CD8-positive, alpha-beta memory T cell (primary cell): ENCODE measurements at regions of chr1 and their contacts with region 1.

Region 1: DNA sequence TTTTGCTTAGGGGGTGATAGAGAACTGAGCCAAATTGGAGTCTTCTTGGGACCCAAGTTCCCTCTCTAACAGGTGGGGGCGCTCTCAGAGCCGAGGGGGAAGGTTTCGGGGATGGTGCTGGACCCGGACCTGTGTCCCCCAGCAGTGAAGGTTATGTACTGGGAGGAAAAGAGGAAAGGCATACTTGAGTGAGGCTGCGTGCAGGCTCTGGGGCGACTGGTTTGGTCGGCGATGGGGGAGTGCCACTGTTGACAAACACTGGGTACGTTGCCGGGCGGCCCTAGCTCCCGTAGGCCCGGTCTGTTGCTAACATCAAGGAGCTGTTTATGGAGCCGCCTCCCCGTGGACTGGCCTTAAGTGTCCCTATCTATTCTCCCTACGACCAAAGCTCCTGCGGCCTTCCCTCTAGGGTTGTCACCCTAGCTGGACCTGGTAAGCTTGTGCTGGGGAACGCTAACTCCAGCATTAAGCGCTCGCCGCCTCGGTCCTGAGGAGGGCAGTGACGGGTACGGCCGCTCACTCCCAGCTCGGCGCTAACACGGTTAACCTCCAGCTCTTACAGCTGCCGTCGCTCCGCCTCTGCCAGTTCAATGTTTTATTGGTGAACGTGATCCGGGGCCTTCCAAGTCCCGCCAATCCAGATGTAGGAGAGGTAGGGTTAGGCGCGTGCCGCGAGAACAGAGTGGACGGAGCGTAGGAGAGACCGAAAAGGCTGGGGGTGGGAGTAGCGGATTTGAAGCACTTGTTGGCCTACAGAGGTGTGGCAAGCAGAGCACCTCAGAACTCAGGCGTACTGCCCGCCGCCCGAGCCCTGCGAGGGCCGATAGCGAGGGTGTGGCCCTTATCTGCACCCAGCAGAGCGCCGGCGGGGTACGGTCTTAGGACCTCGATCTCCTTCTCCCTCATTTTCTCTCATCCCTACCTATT is at the start of gene PPOX:
- DNase-seq: peak; percentile 88 to 97 (median 93)
- H3K4me3 ChIP-seq: peak within 1 kb of the TSS; percentile 81
- H3K4me3 Mint-ChIP-seq: peak within 1 kb of the TSS; percentile 87 to 96 (median 93)
- H3K27ac ChIP-seq: peak within 1 kb of the TSS; percentile 95
- H3K27ac Mint-ChIP-seq: peak within 1 kb of the TSS; percentile 96 to 100 (median 99)
- H3K4me1 ChIP-seq: peaks cover 27% of the 10 kb centered on the region
- H3K4me1 Mint-ChIP-seq: peaks cover 43 to 76% (median 66%) of the 10 kb centered on the region in 3 donors
- H3K27me3 ChIP-seq: no peaks in the 10 kb centered on the region
- H3K27me3 Mint-ChIP-seq: no peaks in the 10 kb centered on the region
- total RNA-seq, gene PPOX: 24.4 to 31.3 TPM

Region 2: GRCh38 chr1:161059293-161059692 is 106.7 kb before region 1 on chr1:
- CTCF ChIA-PET with region 1: no interaction called
- POLR2A ChIA-PET with region 1: no interaction called
- DNase-seq: no peak
- H3K4me3 ChIP-seq: no peak overlapping the region
- H3K4me3 Mint-ChIP-seq: peak overlapping the region in 3 of 7 donors; percentile 25 to 69 (median 29)
- H3K27ac ChIP-seq: no peak overlapping the region
- H3K27ac Mint-ChIP-seq: peak overlapping the region; percentile 43 to 89 (median 74)
- H3K4me1 ChIP-seq: peaks cover 55% of the 10 kb centered on the region
- H3K4me1 Mint-ChIP-seq: peaks cover 51 to 69% (median 67%) of the 10 kb centered on the region in 3 donors
- H3K27me3 ChIP-seq: no peaks in the 10 kb centered on the region
- H3K27me3 Mint-ChIP-seq: peaks cover 0 to 1% of the 10 kb centered on the region in 2 donors

Region 3: DNA sequence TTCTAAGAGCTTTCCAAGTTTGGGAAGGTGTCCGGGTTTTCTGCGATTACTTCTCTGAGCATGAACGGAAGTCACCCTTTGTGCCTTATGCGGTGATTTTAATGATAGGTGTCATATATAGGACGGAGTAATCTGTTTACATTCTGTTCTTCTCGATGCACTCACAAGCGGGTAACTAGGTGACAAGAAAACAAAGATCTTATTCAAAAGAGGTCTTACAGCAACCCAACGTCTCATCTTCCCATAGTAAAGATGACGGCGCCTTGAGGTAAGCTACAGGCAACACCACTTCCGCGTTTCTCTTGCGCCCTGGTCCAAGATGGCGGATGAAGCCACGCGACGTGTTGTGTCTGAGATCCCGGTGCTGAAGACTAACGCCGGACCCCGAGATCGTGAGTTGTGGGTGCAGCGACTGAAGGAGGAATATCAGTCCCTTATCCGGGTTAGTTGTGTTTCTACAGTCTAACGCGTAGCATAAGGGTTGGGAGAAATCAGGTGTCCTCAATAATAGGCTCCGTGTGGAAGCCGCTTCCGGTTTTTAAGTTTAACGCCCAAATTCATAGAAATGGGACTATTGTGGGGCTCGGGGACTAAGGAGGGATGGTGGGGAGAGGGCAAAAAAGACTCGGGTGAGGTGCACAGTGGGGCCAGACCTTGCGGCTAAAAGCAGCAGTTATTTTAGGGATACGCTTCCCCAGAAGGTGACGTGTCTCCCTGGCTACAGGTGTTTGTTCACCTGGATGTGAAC is 12.2 kb before region 1 on chr1 and contains the start of gene UFC1:
- CTCF ChIA-PET with region 1: interaction called, 44 read pairs
- POLR2A ChIA-PET with region 1: interaction called, 9 read pairs
- DNase-seq: peak; percentile 68 to 90 (median 88)
- H3K4me3 ChIP-seq: peak within 1 kb of the TSS; percentile 87
- H3K4me3 Mint-ChIP-seq: peak within 1 kb of the TSS; percentile 98 to 100 (median 98)
- H3K27ac ChIP-seq: peak within 1 kb of the TSS; percentile 98
- H3K27ac Mint-ChIP-seq: peak within 1 kb of the TSS; percentile 98 to 100 (median 100)
- H3K4me1 ChIP-seq: peaks cover 14% of the 10 kb centered on the region
- H3K4me1 Mint-ChIP-seq: peaks cover 25 to 45% (median 34%) of the 10 kb centered on the region in 3 donors
- H3K27me3 ChIP-seq: no peaks in the 10 kb centered on the region
- H3K27me3 Mint-ChIP-seq: no peaks in the 10 kb centered on the region
- total RNA-seq, gene UFC1: 109 to 118 TPM

Region 4: DNA sequence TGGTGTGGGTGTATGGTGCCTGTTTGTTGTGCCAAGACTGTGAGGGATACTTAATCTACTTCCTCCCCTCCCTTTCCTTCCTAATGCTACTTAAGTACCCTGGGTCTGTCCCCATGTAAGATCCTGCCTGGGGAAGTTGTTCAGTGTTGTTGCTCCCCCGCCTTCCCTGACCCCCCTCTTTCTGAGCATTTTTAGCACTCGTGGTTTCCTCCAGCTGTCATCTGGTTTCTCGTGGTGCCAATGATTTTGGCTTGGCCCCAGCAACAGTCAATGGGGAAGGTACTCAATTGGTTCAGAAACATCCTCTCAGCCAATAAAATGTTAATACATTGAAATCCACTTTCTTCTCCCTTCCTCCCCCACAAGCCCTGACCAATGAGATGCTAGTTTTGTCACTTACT is 19.3 kb after region 1 on chr1:
- CTCF ChIA-PET with region 1: interaction called, 49 read pairs
- POLR2A ChIA-PET with region 1: interaction called, 15 read pairs
- DNase-seq: peak; percentile 64 to 90 (median 86)
- H3K4me3 ChIP-seq: peak overlapping the region; percentile 19
- H3K4me3 Mint-ChIP-seq: peak overlapping the region; percentile 82 to 94 (median 88)
- H3K27ac ChIP-seq: peak overlapping the region; percentile 28
- H3K27ac Mint-ChIP-seq: peak overlapping the region; percentile 58 to 98 (median 90)
- H3K4me1 ChIP-seq: peaks cover 85% of the 10 kb centered on the region
- H3K4me1 Mint-ChIP-seq: peaks cover 75 to 87% (median 86%) of the 10 kb centered on the region in 3 donors
- H3K27me3 ChIP-seq: no peaks in the 10 kb centered on the region
- H3K27me3 Mint-ChIP-seq: peaks cover 0 to 1% of the 10 kb centered on the region in 2 donors

Region 5: GRCh38 chr1:161201828-161202725 is 36.1 kb after region 1 on chr1 and contains the start of gene NDUFS2:
- CTCF ChIA-PET with region 1: interaction called, 15 read pairs
- POLR2A ChIA-PET with region 1: interaction called, 23 read pairs
- DNase-seq: peak; percentile 92 to 98 (median 93)
- H3K4me3 ChIP-seq: peak within 1 kb of the TSS; percentile 99
- H3K4me3 Mint-ChIP-seq: peak within 1 kb of the TSS; percentile 93 to 97 (median 95)
- H3K27ac ChIP-seq: peak within 1 kb of the TSS; percentile 89
- H3K27ac Mint-ChIP-seq: peak within 1 kb of the TSS; percentile 96 to 99 (median 98)
- H3K4me1 ChIP-seq: peaks cover 59% of the 10 kb centered on the region
- H3K4me1 Mint-ChIP-seq: peaks cover 59 to 73% (median 71%) of the 10 kb centered on the region in 3 donors
- H3K27me3 ChIP-seq: no peaks in the 10 kb centered on the region
- H3K27me3 Mint-ChIP-seq: no peaks in the 10 kb centered on the region
- total RNA-seq, gene NDUFS2: 93.5 to 97.1 TPM

Region 6: DNA sequence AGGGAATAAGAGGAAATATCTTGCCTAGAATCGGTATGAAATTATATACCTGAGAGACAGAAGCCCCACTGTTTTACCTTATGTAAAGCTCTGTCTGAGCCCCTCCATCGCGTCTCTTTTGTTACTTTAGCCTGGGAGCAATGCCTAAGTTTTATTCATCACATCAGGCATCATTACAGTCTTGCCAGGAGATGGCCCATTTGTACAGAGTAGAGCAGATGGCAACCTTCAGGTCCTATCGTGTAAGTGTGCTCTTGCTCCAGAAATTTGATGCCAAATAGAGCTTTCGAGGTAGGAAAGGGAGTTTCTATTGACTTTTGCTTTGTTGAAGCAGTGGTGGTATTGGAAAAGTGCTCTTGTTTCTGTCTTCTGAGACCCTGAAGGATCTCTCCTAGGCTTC is 176.8 kb after region 1 on chr1:
- CTCF ChIA-PET with region 1: no interaction called
- POLR2A ChIA-PET with region 1: no interaction called
- DNase-seq: no peak
- H3K4me3 ChIP-seq: no peak overlapping the region
- H3K4me3 Mint-ChIP-seq: no peak overlapping the region
- H3K27ac ChIP-seq: no peak overlapping the region
- H3K27ac Mint-ChIP-seq: peak overlapping the region in 1 of 8 donors; percentile 54
- H3K4me1 ChIP-seq: no peaks in the 10 kb centered on the region
- H3K4me1 Mint-ChIP-seq: peaks cover 5 to 21% (median 8%) of the 10 kb centered on the region in 3 donors
- H3K27me3 ChIP-seq: no peaks in the 10 kb centered on the region
- H3K27me3 Mint-ChIP-seq: no peaks in the 10 kb centered on the region